Calu3 (cell line): ENCODE measurements at regions of chr4 and their contacts with region 1.

Region 1: DNA sequence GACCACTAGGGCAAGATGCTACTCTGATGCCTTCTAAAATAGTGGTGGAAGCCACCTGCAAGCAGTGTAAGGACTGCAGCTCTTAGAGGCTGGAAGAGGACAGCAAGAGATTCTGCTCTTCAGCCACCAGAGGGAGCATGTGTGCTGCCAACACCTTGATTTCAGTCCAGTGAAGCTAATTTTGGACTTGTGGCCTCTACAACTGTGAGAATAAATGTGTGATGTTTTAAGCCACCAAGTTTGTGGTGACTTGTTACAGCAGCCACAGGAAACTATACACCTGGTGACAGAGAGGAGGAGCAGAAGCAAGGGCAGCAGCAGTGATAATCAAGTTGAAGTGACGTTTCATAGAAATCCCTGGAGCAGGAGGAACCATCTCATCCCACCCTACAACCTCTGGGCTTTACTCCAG is 55.9 kb downstream of the FGFBP1 start:
- DNase-seq: peak; percentile 54
- H3K4me3 Mint-ChIP-seq: no peak overlapping the region
- H3K27ac Mint-ChIP-seq: peak overlapping the region; percentile 77
- H3K4me1 Mint-ChIP-seq: peaks cover 27% of the 10 kb centered on the region
- H3K27me3 Mint-ChIP-seq: no peaks in the 10 kb centered on the region
- CTCF ChIP-seq: peak; percentile 71

Region 2: DNA sequence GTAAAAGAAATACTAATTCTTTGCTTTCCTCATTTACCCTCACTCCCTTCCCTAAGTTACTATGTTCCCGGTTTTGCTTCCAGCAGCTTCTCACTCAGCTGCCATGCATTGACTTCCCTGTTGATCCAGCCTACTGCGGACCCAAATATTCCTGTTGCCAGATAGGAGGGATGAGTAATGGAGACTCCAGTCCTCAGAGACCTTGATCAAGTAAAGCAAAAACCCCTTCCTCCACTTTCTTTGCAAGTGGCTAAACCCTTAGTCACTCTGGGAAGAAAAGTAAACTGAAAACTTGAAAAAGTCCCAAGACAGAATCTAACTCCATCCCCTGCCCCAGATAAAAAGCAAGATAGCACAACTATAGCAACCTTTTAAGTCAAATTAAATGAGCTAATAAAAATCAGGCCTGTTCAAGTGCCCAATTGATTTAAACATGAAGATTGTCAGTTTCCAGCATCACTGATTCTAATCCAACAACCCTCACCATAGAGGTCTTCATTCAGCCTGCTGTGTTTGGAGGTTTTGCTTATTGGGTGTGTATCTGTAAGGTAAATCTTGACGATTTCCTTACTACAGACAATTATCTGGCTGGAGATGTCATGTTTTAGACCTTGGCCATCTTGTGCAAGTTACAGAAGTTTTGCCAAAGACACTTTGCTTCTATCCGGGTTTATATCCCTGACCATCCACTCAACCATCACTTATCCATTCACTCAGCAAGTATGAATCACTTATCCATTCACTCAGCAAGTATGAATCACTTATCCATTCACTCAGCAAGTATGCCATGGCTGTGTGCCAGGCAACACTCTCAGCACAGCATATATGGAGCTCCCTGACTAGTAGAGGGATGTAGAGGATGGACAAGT is 38.3 kb after region 1 on chr4:
- CTCF ChIA-PET with region 1: interaction called, 6 read pairs
- intact Hi-C with region 1: loop called (anchors 5 kb)
- DNase-seq: peak; percentile 78
- H3K4me3 Mint-ChIP-seq: peak overlapping the region; percentile 43
- H3K27ac Mint-ChIP-seq: peak overlapping the region; percentile 89
- H3K4me1 Mint-ChIP-seq: peaks cover 65% of the 10 kb centered on the region
- H3K27me3 Mint-ChIP-seq: no peaks in the 10 kb centered on the region
- CTCF ChIP-seq: no peak

Region 3: DNA sequence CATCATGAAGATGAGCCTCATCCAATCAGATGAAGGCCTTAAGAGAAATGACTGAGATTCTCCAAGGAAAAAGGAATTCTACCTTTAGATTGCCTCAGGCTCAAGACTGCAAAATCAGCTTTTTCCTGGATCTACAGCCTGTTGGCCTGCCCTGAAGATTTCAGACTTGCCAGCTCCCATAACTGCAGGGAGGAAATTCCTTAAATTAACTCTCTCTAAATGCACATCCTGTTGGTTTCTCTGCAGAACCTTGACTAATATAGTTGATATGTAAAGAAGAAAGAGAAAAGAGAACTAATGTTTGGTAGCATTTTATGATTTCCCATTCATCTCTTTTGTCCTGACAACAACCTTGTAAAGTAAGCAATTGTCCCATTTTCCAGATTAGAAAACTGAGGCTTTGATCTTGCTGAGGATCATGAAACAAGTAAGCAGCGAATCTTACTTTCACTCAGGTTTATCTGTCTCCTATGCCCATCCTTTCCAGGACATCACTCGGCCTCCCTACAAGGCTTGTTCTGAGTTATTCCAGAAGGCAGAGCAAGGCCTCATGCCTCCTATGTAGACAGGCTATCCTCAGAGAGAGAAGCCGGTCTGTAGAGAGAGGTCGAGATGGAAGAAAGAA is 1130.8 kb after region 1 on chr4:
- CTCF ChIA-PET with region 1: no interaction called
- intact Hi-C with region 1: no loop called
- DNase-seq: no peak
- H3K4me3 Mint-ChIP-seq: no peak overlapping the region
- H3K27ac Mint-ChIP-seq: no peak overlapping the region
- H3K4me1 Mint-ChIP-seq: no peaks in the 10 kb centered on the region
- H3K27me3 Mint-ChIP-seq: no peaks in the 10 kb centered on the region
- CTCF ChIP-seq: no peak